ENCODE measurements at regions of chr7 and their contacts with region 1.

Region 1: DNA sequence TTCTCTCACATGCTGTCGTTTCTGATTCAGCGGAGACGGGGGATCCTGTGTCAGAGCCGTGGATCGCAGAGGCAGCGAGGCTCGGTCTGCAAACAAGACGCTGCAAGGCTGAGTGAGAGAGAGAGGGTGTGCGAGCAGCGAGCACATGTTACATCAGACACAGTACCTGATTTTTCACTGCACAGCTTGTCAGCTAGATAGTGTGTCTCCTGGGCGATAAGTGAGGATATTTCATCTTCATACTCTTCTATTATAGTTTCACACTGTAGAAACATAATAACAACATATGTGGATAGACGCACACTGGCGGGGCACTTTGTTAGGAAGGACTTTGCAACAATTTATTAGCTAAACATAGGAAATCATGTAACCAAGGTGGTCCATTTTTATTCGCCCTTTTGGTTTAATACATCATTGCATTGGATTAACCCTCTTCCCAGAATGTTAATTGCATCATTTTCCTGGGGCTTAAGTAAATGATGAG is 39.5 kb downstream of the CNPY1 start:
- DNase-seq: peak; percentile 35
- ATAC-seq: no peak
- H3K4me3 ChIP-seq: no peak overlapping the region
- H3K4me3 Mint-ChIP-seq: no peak overlapping the region
- H3K27ac ChIP-seq: no peak overlapping the region
- H3K27ac Mint-ChIP-seq: no peak overlapping the region
- H3K4me1 ChIP-seq: peaks cover 18 to 29% of the 10 kb centered on the region in 2 donors
- H3K4me1 Mint-ChIP-seq: peaks cover 12% of the 10 kb centered on the region
- H3K27me3 ChIP-seq: peaks cover 5 to 90% (median 72%) of the 10 kb centered on the region in 4 experiments
- H3K27me3 Mint-ChIP-seq: peaks cover 87% of the 10 kb centered on the region
- CTCF ChIP-seq: no peak

Region 2: DNA sequence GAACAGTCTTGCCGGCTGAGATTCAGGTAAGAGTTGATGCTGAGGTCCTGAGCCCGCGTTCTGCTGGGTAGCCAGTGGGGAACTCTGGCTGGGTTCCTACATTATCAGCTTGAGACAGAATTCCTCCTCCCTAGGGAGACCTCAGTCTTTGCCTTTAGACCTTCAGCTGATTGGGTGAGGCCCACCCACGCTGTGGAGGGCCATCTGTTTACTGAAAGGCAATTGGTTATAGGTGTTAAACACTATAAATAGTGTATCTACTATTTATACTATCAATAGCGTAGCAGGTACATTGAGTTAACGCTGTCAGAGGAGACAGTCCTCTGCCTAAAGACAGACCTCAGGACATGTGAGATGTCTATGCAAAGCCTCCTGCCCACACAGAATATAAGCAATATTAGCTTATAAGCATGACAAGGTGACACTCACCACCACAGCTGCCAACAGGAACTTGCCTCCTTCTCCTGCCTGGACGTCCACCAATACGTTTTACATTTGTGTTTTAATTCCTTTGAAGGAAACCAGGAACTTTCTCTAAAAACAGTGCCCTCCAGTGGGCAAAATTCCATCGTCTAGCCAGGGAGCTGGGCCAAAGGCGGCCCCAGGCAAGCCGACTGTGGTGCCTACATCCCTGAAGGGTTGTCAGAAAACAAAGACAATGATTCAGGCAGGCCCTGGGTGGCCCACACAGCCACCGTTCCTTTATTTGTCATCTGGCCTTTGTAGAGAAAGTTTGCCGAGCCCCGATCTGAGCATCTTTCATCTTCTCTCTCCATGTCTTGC is 150.4 kb before region 1 on chr7:
- CTCF ChIA-PET with region 1: no interaction called
- POLR2A ChIA-PET with region 1: no interaction called
- intact Hi-C with region 1: no loop called
- DNase-seq: no peak
- ATAC-seq: no peak
- H3K4me3 ChIP-seq: no peak overlapping the region
- H3K4me3 Mint-ChIP-seq: no peak overlapping the region
- H3K27ac ChIP-seq: no peak overlapping the region
- H3K27ac Mint-ChIP-seq: no peak overlapping the region
- H3K4me1 ChIP-seq: peaks cover 22 to 34% of the 10 kb centered on the region in 2 donors
- H3K4me1 Mint-ChIP-seq: peaks cover 22% of the 10 kb centered on the region
- H3K27me3 ChIP-seq: peaks cover 0 to 27% (median 11%) of the 10 kb centered on the region in 4 experiments
- H3K27me3 Mint-ChIP-seq: peaks cover 23% of the 10 kb centered on the region
- CTCF ChIP-seq: no peak

Region 3: GRCh38 chr7:155371884-155372781 is 134.8 kb before region 1 on chr7:
- CTCF ChIA-PET with region 1: no interaction called
- POLR2A ChIA-PET with region 1: no interaction called
- intact Hi-C with region 1: loop called (anchors 2 kb)
- DNase-seq: peak; percentile 64
- ATAC-seq: peak; percentile 68
- H3K4me3 ChIP-seq: peak overlapping the region in 4 of 5 experiments; percentile 4 to 66 (median 46)
- H3K4me3 Mint-ChIP-seq: peak overlapping the region; percentile 89
- H3K27ac ChIP-seq: no peak overlapping the region
- H3K27ac Mint-ChIP-seq: no peak overlapping the region
- H3K4me1 ChIP-seq: peaks cover 45 to 52% of the 10 kb centered on the region in 2 donors
- H3K4me1 Mint-ChIP-seq: peaks cover 34% of the 10 kb centered on the region
- H3K27me3 ChIP-seq: peaks cover 0 to 66% (median 60%) of the 10 kb centered on the region in 4 experiments
- H3K27me3 Mint-ChIP-seq: peaks cover 65% of the 10 kb centered on the region
- CTCF ChIP-seq: peak; percentile 61

Region 4: DNA sequence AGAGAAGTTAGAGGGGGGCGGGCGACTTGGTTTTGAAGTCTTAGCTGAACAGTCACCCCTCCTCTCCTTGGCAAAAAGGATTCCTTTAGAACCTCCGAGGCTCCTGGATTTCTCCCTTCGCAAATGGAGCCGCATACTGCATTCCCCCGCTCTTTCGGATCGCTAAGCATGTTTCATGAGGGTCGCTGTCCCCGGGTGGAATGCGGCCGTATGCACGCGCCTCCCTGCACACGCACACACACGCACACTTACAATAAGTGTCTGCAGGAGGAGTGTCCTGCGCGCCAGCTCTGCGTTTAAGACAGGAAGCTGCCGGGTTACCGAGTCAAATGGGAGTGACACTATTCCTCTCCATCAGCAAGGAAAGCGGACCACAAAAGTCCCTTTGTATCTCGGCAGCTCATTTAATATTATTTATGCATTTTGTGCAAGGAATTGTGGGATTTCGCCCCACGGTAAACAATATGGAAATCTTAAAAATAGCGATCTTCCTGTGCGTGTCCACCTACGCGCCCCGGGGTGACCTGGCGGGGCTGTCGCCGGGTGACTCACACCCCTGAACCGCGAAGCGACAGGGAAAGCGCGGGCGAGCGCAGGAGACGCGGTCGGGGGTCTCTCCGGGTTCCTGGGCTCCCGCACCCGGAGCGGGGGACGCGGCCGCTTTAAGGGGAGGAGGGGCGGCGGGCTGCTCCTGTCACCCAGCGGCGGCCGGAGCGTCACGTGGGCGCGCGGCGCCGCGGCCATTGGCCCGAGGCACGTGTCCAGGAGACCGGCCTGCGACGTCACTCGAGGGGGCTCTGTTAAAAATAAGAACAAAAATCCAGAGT is 49.9 kb before region 1 on chr7:
- CTCF ChIA-PET with region 1: no interaction called
- POLR2A ChIA-PET with region 1: no interaction called
- intact Hi-C with region 1: loop called (anchors 2 kb)
- DNase-seq: peak; percentile 50
- ATAC-seq: peak; percentile 10
- H3K4me3 ChIP-seq: peak overlapping the region; percentile 1 to 54 (median 42)
- H3K4me3 Mint-ChIP-seq: peak overlapping the region; percentile 77
- H3K27ac ChIP-seq: no peak overlapping the region
- H3K27ac Mint-ChIP-seq: peak overlapping the region; percentile 37
- H3K4me1 ChIP-seq: peaks cover 27 to 51% of the 10 kb centered on the region in 2 donors
- H3K4me1 Mint-ChIP-seq: peaks cover 22% of the 10 kb centered on the region
- H3K27me3 ChIP-seq: peaks cover 0 to 85% (median 63%) of the 10 kb centered on the region in 4 experiments
- H3K27me3 Mint-ChIP-seq: peaks cover 59% of the 10 kb centered on the region
- CTCF ChIP-seq: no peak

Region 5: DNA sequence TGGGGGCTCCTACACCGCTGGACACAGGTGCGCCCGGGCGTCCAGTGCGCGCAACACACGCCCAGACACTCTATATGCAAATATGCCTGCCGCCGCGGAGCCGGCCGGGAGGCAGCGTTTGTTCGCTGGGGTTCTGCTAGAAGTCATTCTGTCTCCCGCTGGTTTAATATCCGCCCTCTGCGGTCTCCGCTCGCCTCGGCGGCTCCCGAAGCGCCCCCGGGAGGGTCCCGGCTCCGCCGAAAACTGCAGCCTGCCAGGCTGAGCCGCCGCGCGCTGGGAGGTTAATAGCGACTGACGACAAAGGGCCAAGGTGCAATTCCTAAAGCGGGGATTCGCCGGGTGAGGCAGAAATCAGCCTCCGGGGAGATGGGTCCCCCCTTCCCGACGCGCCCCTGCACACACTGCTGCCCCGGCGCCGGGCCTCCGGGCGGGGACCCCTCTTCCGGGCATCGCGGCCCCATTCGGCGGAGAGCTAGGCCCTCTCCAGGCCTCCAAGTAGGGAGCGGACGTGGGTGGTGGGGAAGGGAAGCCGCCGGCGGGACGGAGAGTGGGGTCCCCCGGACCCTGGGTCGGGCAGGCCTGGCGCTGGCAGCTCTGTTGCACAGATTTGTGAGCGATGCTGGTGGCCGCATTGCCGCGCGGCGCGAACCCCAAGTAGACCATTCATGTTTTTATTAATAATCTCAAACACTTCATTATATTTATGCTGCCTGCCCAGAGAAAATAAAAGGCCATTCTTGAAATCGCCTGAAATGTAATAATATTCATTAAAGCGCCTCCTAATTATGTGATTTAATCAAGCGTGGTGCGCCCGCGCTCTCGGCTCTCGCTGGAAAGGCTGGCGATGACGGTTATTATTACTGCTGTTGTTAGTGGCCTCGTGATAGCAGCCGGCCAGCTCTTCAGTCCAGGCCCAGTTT is 39.8 kb before region 1 on chr7:
- CTCF ChIA-PET with region 1: no interaction called
- POLR2A ChIA-PET with region 1: interaction called, 3 read pairs
- intact Hi-C with region 1: loop called (anchors 2 kb)
- DNase-seq: peak; percentile 59
- ATAC-seq: no peak
- H3K4me3 ChIP-seq: peak overlapping the region in 3 of 5 experiments; percentile 9 to 45 (median 30)
- H3K4me3 Mint-ChIP-seq: peak overlapping the region; percentile 64
- H3K27ac ChIP-seq: no peak overlapping the region
- H3K27ac Mint-ChIP-seq: no peak overlapping the region
- H3K4me1 ChIP-seq: peaks cover 39 to 59% of the 10 kb centered on the region in 2 donors
- H3K4me1 Mint-ChIP-seq: peaks cover 21% of the 10 kb centered on the region
- H3K27me3 ChIP-seq: peaks cover 0 to 96% (median 85%) of the 10 kb centered on the region in 4 experiments
- H3K27me3 Mint-ChIP-seq: peaks cover 78% of the 10 kb centered on the region
- CTCF ChIP-seq: no peak

Region 6: GRCh38 chr7:155483868-155484325 is 23.0 kb before region 1 on chr7:
- CTCF ChIA-PET with region 1: no interaction called
- POLR2A ChIA-PET with region 1: no interaction called
- intact Hi-C with region 1: no loop called
- DNase-seq: no peak
- ATAC-seq: no peak
- H3K4me3 ChIP-seq: no peak overlapping the region
- H3K4me3 Mint-ChIP-seq: no peak overlapping the region
- H3K27ac ChIP-seq: no peak overlapping the region
- H3K27ac Mint-ChIP-seq: no peak overlapping the region
- H3K4me1 ChIP-seq: peaks cover under 1 to 2% of the 10 kb centered on the region in 2 donors
- H3K4me1 Mint-ChIP-seq: peaks cover 5% of the 10 kb centered on the region
- H3K27me3 ChIP-seq: peaks cover 0 to 38% (median 6%) of the 10 kb centered on the region in 4 experiments
- H3K27me3 Mint-ChIP-seq: peaks cover 43% of the 10 kb centered on the region
- CTCF ChIP-seq: no peak

Region 7: GRCh38 chr7:155729834-155730233 is 222.9 kb after region 1 on chr7:
- CTCF ChIA-PET with region 1: no interaction called
- POLR2A ChIA-PET with region 1: interaction called, 10 read pairs
- intact Hi-C with region 1: no loop called
- DNase-seq: no peak
- ATAC-seq: no peak
- H3K4me3 ChIP-seq: no peak overlapping the region
- H3K4me3 Mint-ChIP-seq: no peak overlapping the region
- H3K27ac ChIP-seq: peak overlapping the region in 1 of 2 donors; percentile 76
- H3K27ac Mint-ChIP-seq: peak overlapping the region; percentile 43
- H3K4me1 ChIP-seq: peaks cover 41 to 53% of the 10 kb centered on the region in 2 donors
- H3K4me1 Mint-ChIP-seq: peaks cover 80% of the 10 kb centered on the region
- H3K27me3 ChIP-seq: no peaks in the 10 kb centered on the region
- H3K27me3 Mint-ChIP-seq: no peaks in the 10 kb centered on the region
- CTCF ChIP-seq: no peak

Measured in B cell (primary cell).